ENCODE measurements at regions of chr3 and their contacts with region 1.

Region 1: DNA sequence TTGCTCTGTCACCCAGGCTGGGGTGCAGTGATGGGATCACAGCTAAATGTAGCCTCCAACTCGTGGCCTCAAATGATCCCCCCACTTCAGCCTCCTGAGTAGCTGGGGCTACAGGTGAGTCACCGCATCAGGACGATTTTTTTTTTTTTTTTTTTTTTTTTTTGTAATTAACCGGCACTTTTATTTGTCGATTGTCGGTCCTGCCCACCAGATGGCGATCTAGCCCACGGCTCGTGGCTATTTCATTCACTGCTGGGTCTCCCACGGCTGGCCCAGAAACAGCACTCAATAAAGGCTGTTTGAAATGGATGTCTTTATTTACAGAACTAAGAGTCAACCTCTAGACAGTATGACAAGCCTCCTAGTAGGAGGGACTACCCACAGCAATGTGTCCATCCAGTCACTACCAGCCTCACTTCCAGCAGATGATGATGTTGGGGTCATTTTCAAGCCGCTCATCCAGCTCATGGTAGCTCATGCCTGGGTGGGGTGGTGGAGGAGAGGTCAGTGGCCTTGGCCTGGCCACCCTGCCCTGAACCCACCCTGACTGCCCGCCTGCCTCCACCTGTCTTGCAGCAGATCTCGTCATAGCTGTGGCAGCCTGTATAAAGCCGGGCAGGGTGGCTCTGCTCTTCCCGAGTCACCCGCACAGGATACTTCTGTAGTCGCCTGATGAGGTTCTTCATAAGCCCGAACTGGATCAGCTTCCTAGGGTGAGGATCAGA is 1.8 kb upstream of the ZMYND10 start:
- DNase-seq: peak in 4 of 6 donors; percentile 70 to 84 (median 80)
- ATAC-seq: peak in 3 of 4 donors; percentile 7 to 15 (median 12)
- H3K4me3 ChIP-seq: no peak overlapping the region
- H3K27ac ChIP-seq: no peak overlapping the region
- H3K4me1 ChIP-seq: peaks cover 0 to 23% (median 7%) of the 10 kb centered on the region in 3 donors
- H3K27me3 ChIP-seq: no peaks in the 10 kb centered on the region
- CTCF ChIP-seq: peak; percentile 25 to 49 (median 36)

Region 2: GRCh38 chr3:50550079-50550741 is 202.9 kb after region 1 on chr3:
- intact Hi-C with region 1: loop called in 1 of 3 experiments (anchors 10 kb)
- DNase-seq: peak in 4 of 6 donors; percentile 23 to 78 (median 61)
- ATAC-seq: peak; percentile 53 to 79 (median 72)
- H3K4me3 ChIP-seq: no peak overlapping the region
- H3K27ac ChIP-seq: no peak overlapping the region
- H3K4me1 ChIP-seq: no peaks in the 10 kb centered on the region
- H3K27me3 ChIP-seq: no peaks in the 10 kb centered on the region
- CTCF ChIP-seq: peak; percentile 57 to 72 (median 64)